Right ventricle myocardium inferior (tissue), 1 donor: ENCODE measurements at regions of chr17 and their contacts with region 1.

Region 1: DNA sequence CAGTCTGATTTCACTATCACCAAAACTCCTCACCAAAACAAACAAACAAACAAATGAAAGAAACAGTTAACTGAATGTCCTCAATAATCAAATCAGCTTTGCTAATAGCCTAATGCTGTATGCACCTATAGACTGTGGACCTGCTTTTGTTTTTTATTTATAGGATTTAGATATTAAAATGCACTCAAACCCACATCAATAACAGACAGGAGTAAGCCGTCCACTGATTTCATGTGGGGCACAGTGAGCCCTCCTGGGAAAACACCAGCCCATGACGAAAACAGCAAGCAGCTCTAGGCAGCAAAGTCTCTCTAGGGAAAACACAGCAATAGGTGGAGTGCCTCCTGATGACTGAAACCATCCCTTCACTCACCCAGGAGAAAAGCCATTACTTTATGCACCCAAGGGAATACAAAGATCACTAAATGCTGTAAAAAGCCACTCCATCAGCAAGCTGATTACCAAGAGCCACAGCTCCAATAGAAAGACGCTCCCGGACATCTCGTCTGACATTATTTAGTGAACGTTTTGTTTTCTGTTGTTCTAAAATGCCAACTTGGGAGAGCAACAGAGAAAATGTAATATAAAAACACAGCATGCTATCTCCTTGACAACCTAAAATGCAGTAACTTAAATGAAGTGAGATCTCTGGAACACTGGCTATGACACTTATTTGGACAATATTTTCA is 47.8 kb downstream of the ANKFY1 start:
- DNase-seq: no peak
- ATAC-seq: peak; percentile 24

Region 2: GRCh38 chr17:4263282-4264215 is 47.5 kb after region 1 on chr17 and contains the start of gene ANKFY1:
- intact Hi-C with region 1: loop called (anchors 5 kb)
- DNase-seq: peak; percentile 97
- ATAC-seq: peak; percentile 97
- total RNA-seq, gene ANKFY1: 23.3 TPM

Region 3: GRCh38 chr17:4304417-4305027 is 88.5 kb after region 1 on chr17:
- intact Hi-C with region 1: loop called (anchors 5 kb)
- DNase-seq: no peak
- ATAC-seq: peak; percentile 60

Region 4: DNA sequence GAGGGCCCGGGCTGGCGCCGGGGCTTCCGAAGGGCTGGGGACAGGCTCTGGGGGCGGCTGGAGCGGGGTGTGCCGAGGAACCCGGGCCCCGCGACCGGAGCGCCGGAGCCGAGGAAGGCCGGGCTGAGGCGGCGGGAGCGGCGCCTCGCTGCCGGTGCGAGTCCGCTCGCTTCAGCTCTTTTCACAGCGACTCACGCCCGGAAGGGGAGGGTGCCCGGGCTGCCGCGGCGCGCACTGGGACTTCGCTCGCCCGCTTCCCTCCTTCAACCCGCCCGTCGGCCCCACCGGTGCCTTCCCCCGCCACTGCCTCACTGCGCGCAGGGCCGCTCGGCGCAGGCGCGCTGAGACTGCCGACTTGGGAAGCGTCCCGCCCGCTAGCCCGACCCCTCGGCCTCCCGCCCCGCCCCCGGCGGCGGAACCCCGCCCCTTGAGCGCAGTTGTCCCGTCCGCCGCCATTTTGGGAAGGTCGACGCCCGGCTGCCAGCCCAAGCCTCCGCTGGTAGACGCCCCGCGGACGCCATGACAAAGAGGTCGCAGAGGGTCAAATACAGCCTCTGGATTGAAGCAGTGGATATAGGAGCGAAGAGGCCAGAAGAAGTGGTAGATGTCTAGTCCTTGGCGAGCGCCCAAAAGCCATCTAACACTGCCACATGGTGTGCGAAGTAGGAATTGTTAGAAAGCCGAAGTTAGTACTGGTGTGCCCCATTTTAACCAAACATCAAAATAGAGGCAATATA is 150.5 kb after region 1 on chr17 and contains the start of gene UBE2G1:
- intact Hi-C with region 1: loop called (anchors 5 kb)
- DNase-seq: peak; percentile 99
- ATAC-seq: peak; percentile 95
- total RNA-seq, gene UBE2G1: 106 TPM

Region 5: GRCh38 chr17:4412933-4413831 is 197.2 kb after region 1 on chr17:
- intact Hi-C with region 1: loop called (anchors 1 kb)
- DNase-seq: peak; percentile 96
- ATAC-seq: peak; percentile 96